CD8-positive, alpha-beta T cell (primary cell): ENCODE measurements at regions of chr22 and their contacts with region 1.

Region 1: DNA sequence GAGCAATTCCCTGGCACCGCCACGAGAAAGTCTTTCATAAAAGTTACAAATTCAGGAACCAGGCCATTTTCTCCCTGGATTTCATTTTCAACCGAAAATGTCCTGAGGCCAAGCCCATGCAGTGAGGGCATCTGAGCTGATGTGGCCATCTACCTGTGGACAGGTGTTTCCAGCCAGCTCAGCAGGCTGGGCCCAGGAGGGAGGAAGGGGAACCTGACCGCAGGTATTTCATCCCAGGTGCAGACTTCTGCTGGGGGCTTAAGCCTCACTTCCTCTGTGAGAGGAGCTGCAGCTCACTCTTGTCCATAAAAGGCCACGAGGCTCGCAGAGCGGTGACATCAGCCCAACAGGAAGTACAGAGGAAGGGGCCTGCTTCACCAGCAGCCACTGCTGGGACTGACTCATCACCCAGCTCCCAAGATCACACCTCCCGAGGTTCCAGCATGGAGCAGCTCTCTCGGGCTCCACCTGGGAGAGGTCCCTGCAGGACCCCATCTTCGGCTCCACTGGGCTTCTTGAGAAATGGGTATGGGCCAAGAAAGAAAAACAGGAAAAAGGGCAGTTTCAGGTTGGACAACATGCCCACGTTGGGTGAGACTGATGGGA is 56.4 kb downstream of the MYH9 start:
- DNase-seq: peak; percentile 48 to 94 (median 81)
- ATAC-seq: peak; percentile 51
- H3K4me3 ChIP-seq: peak overlapping the region; percentile 38 to 42
- H3K4me3 Mint-ChIP-seq: peak overlapping the region; percentile 86
- H3K27ac ChIP-seq: peak overlapping the region; percentile 80 to 93
- H3K27ac Mint-ChIP-seq: peak overlapping the region; percentile 99
- H3K4me1 ChIP-seq: peaks cover 95% of the 10 kb centered on the region
- H3K4me1 Mint-ChIP-seq: peaks cover 99% of the 10 kb centered on the region
- H3K27me3 ChIP-seq: no peaks in the 10 kb centered on the region
- H3K27me3 Mint-ChIP-seq: no peaks in the 10 kb centered on the region
- CTCF ChIP-seq: no peak

Region 2: GRCh38 chr22:36220437-36220921 is 110.9 kb before region 1 on chr22:
- CTCF ChIA-PET with region 1: no interaction called
- POLR2A ChIA-PET with region 1: no interaction called
- intact Hi-C with region 1: no loop called
- DNase-seq: no peak
- ATAC-seq: no peak
- H3K4me3 ChIP-seq: no peak overlapping the region
- H3K4me3 Mint-ChIP-seq: no peak overlapping the region
- H3K27ac ChIP-seq: no peak overlapping the region
- H3K27ac Mint-ChIP-seq: no peak overlapping the region
- H3K4me1 ChIP-seq: peaks cover 4% of the 10 kb centered on the region
- H3K4me1 Mint-ChIP-seq: peaks cover 7% of the 10 kb centered on the region
- H3K27me3 ChIP-seq: no peaks in the 10 kb centered on the region
- H3K27me3 Mint-ChIP-seq: peaks cover 6% of the 10 kb centered on the region
- CTCF ChIP-seq: no peak

Region 3: DNA sequence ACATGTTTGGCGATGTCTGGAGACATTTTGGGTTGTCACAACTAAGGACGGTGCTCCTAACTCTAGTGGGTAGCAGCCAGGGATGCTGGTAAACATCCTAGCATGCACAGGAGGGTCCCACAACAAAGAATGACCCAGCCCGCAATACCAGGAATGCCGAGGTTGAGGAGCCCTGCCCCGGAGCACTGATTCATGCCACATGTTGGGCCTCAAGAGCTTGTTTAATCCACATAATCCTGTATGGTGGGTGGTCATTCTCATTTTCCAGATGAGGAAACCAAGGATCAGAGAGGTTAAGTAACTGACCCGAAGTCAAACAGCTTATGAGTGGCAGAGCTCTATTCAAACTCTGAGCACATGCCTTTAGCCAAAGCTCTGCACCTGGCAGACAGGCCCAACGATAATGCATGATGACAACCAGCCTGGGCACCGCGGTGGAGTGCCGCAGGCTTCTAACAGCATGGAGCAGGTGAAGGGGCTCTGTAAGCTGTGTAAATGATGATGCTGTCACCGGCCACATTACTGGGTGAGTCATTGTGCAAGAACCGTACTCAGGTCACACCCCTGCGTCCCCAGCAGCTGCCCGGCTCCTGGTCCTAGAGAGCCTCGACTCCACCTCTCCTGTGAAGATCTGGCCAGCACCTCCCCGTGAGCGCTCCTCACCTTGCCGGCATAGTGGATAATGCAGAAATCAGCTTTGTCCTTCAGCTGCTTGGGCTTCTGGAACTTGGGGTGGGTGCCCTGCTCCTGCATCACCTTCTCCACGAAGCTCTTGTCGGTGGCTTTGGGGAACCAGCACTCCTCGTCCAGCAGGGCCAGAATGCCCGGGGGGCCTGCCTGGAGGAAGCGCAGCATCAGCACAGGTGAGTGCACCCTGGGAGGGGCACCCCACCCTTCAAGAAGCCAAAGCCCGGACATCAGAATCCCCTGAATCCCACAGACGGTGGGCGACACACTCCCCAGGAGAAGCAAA is 19.7 kb before region 1 on chr22:
- CTCF ChIA-PET with region 1: interaction called, 11 read pairs
- POLR2A ChIA-PET with region 1: interaction called, 5 read pairs
- intact Hi-C with region 1: loop called in 1 of 2 experiments (anchors 2 kb)
- DNase-seq: no peak
- ATAC-seq: no peak
- H3K4me3 ChIP-seq: no peak overlapping the region
- H3K4me3 Mint-ChIP-seq: no peak overlapping the region
- H3K27ac ChIP-seq: no peak overlapping the region
- H3K27ac Mint-ChIP-seq: no peak overlapping the region
- H3K4me1 ChIP-seq: no peaks in the 10 kb centered on the region
- H3K4me1 Mint-ChIP-seq: peaks cover 3% of the 10 kb centered on the region
- H3K27me3 ChIP-seq: no peaks in the 10 kb centered on the region
- H3K27me3 Mint-ChIP-seq: no peaks in the 10 kb centered on the region
- CTCF ChIP-seq: no peak

Region 4: DNA sequence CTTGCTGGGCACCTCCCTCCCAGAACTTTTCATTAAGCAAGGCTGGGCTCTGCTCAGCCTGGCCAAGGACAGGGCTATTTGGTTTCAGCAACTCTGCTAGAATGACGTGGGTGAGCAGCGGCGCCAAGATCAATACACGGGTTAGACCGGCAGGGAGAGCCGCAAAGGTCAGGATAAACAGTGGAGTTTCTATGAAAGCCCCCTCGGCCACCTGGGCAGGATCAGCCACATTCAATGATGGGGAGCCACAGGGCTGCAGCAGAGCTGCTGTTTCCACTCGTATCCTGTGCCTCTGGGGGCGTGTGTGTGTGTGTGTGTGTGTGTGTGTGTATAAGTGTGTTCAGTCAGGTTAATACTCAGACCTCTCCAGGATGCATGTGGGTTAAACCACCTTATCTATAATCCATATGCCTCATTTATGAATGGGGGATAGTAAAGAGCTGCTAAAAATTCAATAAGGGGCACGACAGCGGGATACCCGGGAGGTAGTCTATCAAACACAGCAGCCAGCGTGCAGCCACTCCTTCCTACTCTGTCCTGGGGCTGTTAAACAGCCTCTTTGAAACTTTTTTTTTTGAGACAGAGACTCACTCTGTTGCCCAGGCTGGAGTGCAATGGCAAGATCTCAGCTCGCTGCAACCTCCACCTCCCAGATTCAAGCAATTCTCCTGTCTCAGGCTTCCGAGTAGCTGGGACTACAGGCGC is 21.5 kb after region 1 on chr22:
- CTCF ChIA-PET with region 1: interaction called, 6 read pairs
- POLR2A ChIA-PET with region 1: interaction called, 21 read pairs
- intact Hi-C with region 1: loop called in 1 of 2 experiments (anchors 2 kb)
- DNase-seq: peak in 5 of 9 experiments; percentile 51 to 81 (median 67)
- ATAC-seq: peak; percentile 32
- H3K4me3 ChIP-seq: peak overlapping the region in 1 of 2 experiments; percentile 36
- H3K4me3 Mint-ChIP-seq: peak overlapping the region; percentile 69
- H3K27ac ChIP-seq: peak overlapping the region; percentile 38 to 74
- H3K27ac Mint-ChIP-seq: peak overlapping the region; percentile 95
- H3K4me1 ChIP-seq: peaks cover 95% of the 10 kb centered on the region
- H3K4me1 Mint-ChIP-seq: peaks cover 95% of the 10 kb centered on the region
- H3K27me3 ChIP-seq: no peaks in the 10 kb centered on the region
- H3K27me3 Mint-ChIP-seq: no peaks in the 10 kb centered on the region
- CTCF ChIP-seq: no peak

Region 5: DNA sequence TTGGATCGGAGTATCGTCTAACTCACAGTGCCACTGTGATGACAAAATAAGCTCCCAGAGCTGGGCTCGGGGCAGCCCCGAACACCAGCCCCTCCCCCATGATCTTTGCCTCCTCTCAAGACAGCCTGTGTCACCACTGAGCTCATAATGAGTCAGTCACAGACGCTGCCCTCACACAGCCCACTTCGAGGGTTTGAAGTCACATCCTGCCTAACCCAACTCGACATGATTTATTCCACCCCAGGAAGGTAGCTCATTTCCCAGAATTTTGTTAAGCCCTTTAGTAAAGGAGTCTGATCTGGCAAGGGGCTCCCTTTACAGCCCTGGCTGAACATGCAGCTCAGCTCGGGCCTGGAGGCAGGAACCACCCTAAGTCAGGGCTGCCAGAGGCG is 33.6 kb after region 1 on chr22:
- CTCF ChIA-PET with region 1: interaction called, 5 read pairs
- POLR2A ChIA-PET with region 1: interaction called, 19 read pairs
- intact Hi-C with region 1: loop called (anchors 2 to 5 kb)
- DNase-seq: peak; percentile 70 to 98 (median 84)
- ATAC-seq: peak; percentile 86
- H3K4me3 ChIP-seq: no peak overlapping the region
- H3K4me3 Mint-ChIP-seq: peak overlapping the region; percentile 68
- H3K27ac ChIP-seq: peak overlapping the region; percentile 57 to 86
- H3K27ac Mint-ChIP-seq: peak overlapping the region; percentile 95
- H3K4me1 ChIP-seq: peaks cover 98% of the 10 kb centered on the region
- H3K4me1 Mint-ChIP-seq: peaks cover 94% of the 10 kb centered on the region
- H3K27me3 ChIP-seq: no peaks in the 10 kb centered on the region
- H3K27me3 Mint-ChIP-seq: no peaks in the 10 kb centered on the region
- CTCF ChIP-seq: no peak

Region 6: GRCh38 chr22:36454916-36455570 is 123.6 kb after region 1 on chr22:
- CTCF ChIA-PET with region 1: interaction called, 4 read pairs
- POLR2A ChIA-PET with region 1: interaction called, 6 read pairs
- intact Hi-C with region 1: loop called (anchors 1 kb)
- DNase-seq: peak; percentile 88 to 99 (median 96)
- ATAC-seq: peak; percentile 71
- H3K4me3 ChIP-seq: peak overlapping the region; percentile 64 to 84
- H3K4me3 Mint-ChIP-seq: peak overlapping the region; percentile 79
- H3K27ac ChIP-seq: peak overlapping the region; percentile 91 to 96
- H3K27ac Mint-ChIP-seq: peak overlapping the region; percentile 90
- H3K4me1 ChIP-seq: peaks cover 51% of the 10 kb centered on the region
- H3K4me1 Mint-ChIP-seq: peaks cover 43% of the 10 kb centered on the region
- H3K27me3 ChIP-seq: no peaks in the 10 kb centered on the region
- H3K27me3 Mint-ChIP-seq: no peaks in the 10 kb centered on the region
- CTCF ChIP-seq: no peak

Region 7: GRCh38 chr22:36528795-36529751 is 197.7 kb after region 1 on chr22 and contains the start of gene EIF3D:
- CTCF ChIA-PET with region 1: no interaction called
- POLR2A ChIA-PET with region 1: no interaction called
- intact Hi-C with region 1: loop called in 1 of 2 experiments (anchors 1 kb)
- DNase-seq: peak; percentile 95 to 100 (median 98)
- ATAC-seq: peak; percentile 92
- H3K4me3 ChIP-seq: peak within 1 kb of the TSS; percentile 67 to 90
- H3K4me3 Mint-ChIP-seq: peak within 1 kb of the TSS; percentile 90
- H3K27ac ChIP-seq: peak within 1 kb of the TSS; percentile 91 to 93
- H3K27ac Mint-ChIP-seq: peak within 1 kb of the TSS; percentile 99
- H3K4me1 ChIP-seq: peaks cover 12% of the 10 kb centered on the region
- H3K4me1 Mint-ChIP-seq: peaks cover 24% of the 10 kb centered on the region
- H3K27me3 ChIP-seq: no peaks in the 10 kb centered on the region
- H3K27me3 Mint-ChIP-seq: no peaks in the 10 kb centered on the region
- CTCF ChIP-seq: no peak
- total RNA-seq, gene EIF3D: 302 to 315 TPM